ENCODE measurements at regions of chr14 and their contacts with region 1.

Region 1: GRCh38 chr14:64914237-64914971 is at the start of gene CHURC1:
- DNase-seq: peak; percentile 98 to 100
- H3K4me3 ChIP-seq: peak within 1 kb of the TSS; percentile 90 to 99
- H3K27ac ChIP-seq: peak within 1 kb of the TSS; percentile 94 to 98
- H3K4me1 ChIP-seq: peaks cover 3 to 30% of the 10 kb centered on the region in 2 donors
- H3K27me3 ChIP-seq: no peaks in the 10 kb centered on the region
- CTCF ChIP-seq: no peak
- total RNA-seq, gene CHURC1: 31.9 TPM

Region 2: DNA sequence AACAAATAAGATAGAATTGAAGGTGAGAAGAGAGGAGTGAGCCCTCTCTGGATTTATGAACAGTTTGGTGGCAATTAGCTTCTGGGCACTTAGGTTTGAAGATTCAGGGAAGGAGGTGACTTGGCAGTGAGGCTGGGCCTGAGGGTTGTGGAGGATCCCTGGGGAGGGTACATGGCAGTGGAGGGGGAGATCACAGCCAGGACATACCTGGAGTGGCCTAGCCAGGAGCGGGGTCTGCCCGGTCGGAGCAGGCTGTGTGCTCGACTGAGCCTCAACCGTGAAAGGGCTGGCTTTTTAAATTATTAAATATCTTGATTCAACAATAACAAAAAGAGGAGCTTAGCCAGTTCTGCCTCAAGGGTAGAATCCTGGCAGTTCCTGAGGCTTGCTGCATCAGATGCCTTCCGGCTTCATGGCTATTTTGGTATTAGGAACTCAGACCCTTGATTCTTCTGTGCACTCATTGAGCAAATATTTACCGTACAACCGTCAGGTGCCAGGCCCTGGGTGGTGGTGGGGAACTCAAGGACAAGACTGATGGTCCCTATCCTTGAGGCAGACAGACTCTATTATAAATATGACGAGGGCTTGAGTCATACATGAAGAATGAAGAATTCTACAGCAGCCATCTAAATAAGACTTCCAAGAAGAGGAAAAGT is 108.1 kb before region 1 on chr14:
- intact Hi-C with region 1: loop called (anchors 5 kb)
- DNase-seq: peak; percentile 44 to 90
- H3K4me3 ChIP-seq: no peak overlapping the region
- H3K27ac ChIP-seq: peak overlapping the region; percentile 92 to 93
- H3K4me1 ChIP-seq: peaks cover 8 to 25% of the 10 kb centered on the region in 2 donors
- H3K27me3 ChIP-seq: no peaks in the 10 kb centered on the region
- CTCF ChIP-seq: no peak

Region 3: GRCh38 chr14:64899958-64900357 is 14.4 kb before region 1 on chr14:
- intact Hi-C with region 1: no loop called
- DNase-seq: no peak
- H3K4me3 ChIP-seq: no peak overlapping the region
- H3K27ac ChIP-seq: no peak overlapping the region
- H3K4me1 ChIP-seq: no peaks in the 10 kb centered on the region
- H3K27me3 ChIP-seq: no peaks in the 10 kb centered on the region
- CTCF ChIP-seq: no peak

Region 4: DNA sequence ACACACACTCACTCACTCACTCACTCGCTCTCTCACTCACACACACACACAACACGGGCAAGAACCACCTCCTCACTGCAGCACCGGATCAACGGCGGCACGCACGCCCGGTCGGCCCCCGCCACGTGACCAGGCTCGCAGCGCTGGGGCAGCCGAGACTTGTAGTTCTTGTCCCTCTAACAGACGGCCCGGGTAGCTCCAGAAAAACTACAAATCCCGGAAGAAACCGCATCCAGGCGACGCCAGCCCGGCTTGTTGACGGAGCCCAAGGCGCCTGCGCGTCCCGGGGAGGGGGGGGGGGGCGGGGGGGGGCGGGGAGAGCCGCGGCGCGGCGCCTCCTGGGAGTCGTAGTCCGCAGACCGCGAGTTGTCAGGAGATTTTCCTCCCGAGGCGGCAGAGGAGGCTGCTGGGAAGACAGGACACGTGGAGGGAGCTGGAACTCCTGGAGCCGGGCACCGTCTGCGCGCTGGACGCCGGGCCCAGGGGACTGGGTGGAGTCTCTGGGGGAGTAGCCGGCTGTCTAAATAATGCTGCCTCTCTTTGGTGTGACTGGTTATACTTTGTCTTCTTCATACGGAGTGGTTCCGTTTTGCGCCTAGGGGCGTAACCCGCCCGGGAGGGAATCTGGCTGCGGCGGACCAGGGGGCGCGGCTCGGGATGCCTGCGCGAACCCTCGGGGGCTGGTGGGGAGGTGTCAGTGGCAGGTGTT is 188.2 kb after region 1 on chr14 and contains the start of gene MAX:
- intact Hi-C with region 1: loop called (anchors 10 kb)
- DNase-seq: peak; percentile 97 to 99
- H3K4me3 ChIP-seq: peak within 1 kb of the TSS; percentile 89 to 93
- H3K27ac ChIP-seq: peak within 1 kb of the TSS; percentile 81 to 88
- H3K4me1 ChIP-seq: peaks cover 6 to 32% of the 10 kb centered on the region in 2 donors
- H3K27me3 ChIP-seq: no peaks in the 10 kb centered on the region
- CTCF ChIP-seq: no peak
- total RNA-seq, gene MAX: 26.8 TPM

Measured in ascending aorta (tissue), 2 donors.